ENCODE measurements at regions of chr1 and their contacts with region 1.

Region 1: GRCh38 chr1:110645821-110646735 is 28.7 kb downstream of the KCNA3 start:
- DNase-seq: no peak
- ATAC-seq: no peak
- H3K4me3 Mint-ChIP-seq: no peak overlapping the region
- H3K27ac Mint-ChIP-seq: peak overlapping the region; percentile 53
- H3K4me1 Mint-ChIP-seq: peaks cover 41% of the 10 kb centered on the region
- H3K27me3 Mint-ChIP-seq: no peaks in the 10 kb centered on the region

Region 2: GRCh38 chr1:110548381-110548780 is 97.7 kb before region 1 on chr1:
- CTCF ChIA-PET with region 1: no interaction called
- POLR2A ChIA-PET with region 1: no interaction called
- DNase-seq: no peak
- ATAC-seq: no peak
- H3K4me3 Mint-ChIP-seq: no peak overlapping the region
- H3K27ac Mint-ChIP-seq: no peak overlapping the region
- H3K4me1 Mint-ChIP-seq: no peaks in the 10 kb centered on the region
- H3K27me3 Mint-ChIP-seq: peaks cover 22% of the 10 kb centered on the region

Region 3: DNA sequence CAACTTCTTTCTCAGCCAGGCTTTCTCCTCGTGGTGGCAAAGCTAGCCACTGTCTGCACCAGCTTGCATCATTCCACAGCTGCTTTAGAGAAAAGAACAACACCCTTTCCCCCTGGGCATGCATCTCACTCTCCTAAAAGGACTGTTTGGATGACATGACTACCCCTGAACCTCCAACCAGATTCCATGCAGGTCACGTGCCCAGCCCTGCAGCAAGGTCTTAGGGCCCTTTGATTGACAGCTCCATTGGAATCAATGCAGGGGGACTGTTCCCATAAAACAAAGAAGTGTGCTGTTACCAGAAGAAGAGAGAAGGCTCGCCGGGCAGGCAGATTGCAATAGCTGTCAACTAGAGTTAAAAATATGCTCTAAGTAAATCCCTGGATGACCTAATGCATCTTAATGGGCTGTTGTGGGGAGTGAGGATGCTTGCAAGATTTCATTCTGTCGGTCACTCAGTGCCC is 64.4 kb before region 1 on chr1:
- CTCF ChIA-PET with region 1: no interaction called
- POLR2A ChIA-PET with region 1: no interaction called
- DNase-seq: no peak
- ATAC-seq: no peak
- H3K4me3 Mint-ChIP-seq: no peak overlapping the region
- H3K27ac Mint-ChIP-seq: no peak overlapping the region
- H3K4me1 Mint-ChIP-seq: no peaks in the 10 kb centered on the region
- H3K27me3 Mint-ChIP-seq: peaks cover 20% of the 10 kb centered on the region

Region 4: GRCh38 chr1:110630839-110631663 is 15.0 kb before region 1 on chr1:
- CTCF ChIA-PET with region 1: interaction called, 110 read pairs
- POLR2A ChIA-PET with region 1: interaction called, 52 read pairs
- DNase-seq: peak; percentile 94
- ATAC-seq: peak; percentile 84
- H3K4me3 Mint-ChIP-seq: no peak overlapping the region
- H3K27ac Mint-ChIP-seq: no peak overlapping the region
- H3K4me1 Mint-ChIP-seq: peaks cover 32% of the 10 kb centered on the region
- H3K27me3 Mint-ChIP-seq: no peaks in the 10 kb centered on the region

Region 5: GRCh38 chr1:110663241-110663640 is 17.2 kb after region 1 on chr1:
- CTCF ChIA-PET with region 1: interaction called, 41 read pairs
- POLR2A ChIA-PET with region 1: interaction called, 33 read pairs
- DNase-seq: no peak
- ATAC-seq: no peak
- H3K4me3 Mint-ChIP-seq: no peak overlapping the region
- H3K27ac Mint-ChIP-seq: no peak overlapping the region
- H3K4me1 Mint-ChIP-seq: peaks cover 22% of the 10 kb centered on the region
- H3K27me3 Mint-ChIP-seq: no peaks in the 10 kb centered on the region

Region 6: GRCh38 chr1:110668549-110668948 is 22.5 kb after region 1 on chr1:
- CTCF ChIA-PET with region 1: interaction called, 41 read pairs
- POLR2A ChIA-PET with region 1: interaction called, 56 read pairs
- DNase-seq: no peak
- ATAC-seq: peak; percentile 21
- H3K4me3 Mint-ChIP-seq: peak overlapping the region; percentile 66
- H3K27ac Mint-ChIP-seq: peak overlapping the region; percentile 78
- H3K4me1 Mint-ChIP-seq: peaks cover 35% of the 10 kb centered on the region
- H3K27me3 Mint-ChIP-seq: no peaks in the 10 kb centered on the region

Region 7: GRCh38 chr1:110674337-110675059 is 28.4 kb after region 1 on chr1 and contains the start of gene KCNA3:
- CTCF ChIA-PET with region 1: interaction called, 41 read pairs
- POLR2A ChIA-PET with region 1: interaction called, 56 read pairs
- DNase-seq: peak; percentile 77
- ATAC-seq: peak; percentile 43
- H3K4me3 Mint-ChIP-seq: peak within 1 kb of the TSS; percentile 95
- H3K27ac Mint-ChIP-seq: peak within 1 kb of the TSS; percentile 91
- H3K4me1 Mint-ChIP-seq: peaks cover 33% of the 10 kb centered on the region
- H3K27me3 Mint-ChIP-seq: no peaks in the 10 kb centered on the region
- total RNA-seq, gene KCNA3: 49.0 to 49.3 TPM

Measured in activated CD8-positive, alpha-beta T cell treated with anti-CD3 and anti-CD28 coated beads, Interleukin-2, amount 10 ng/mL, durations not matched to agents 7 days and 5 days (primary cell).